ENCODE measurements at regions of chr4 and their contacts with region 1.

Region 1: GRCh38 chr4:168143601-168144000 is 51.3 kb downstream of the ANXA10 start:
- DNase-seq: no peak
- H3K4me3 ChIP-seq: no peak overlapping the region
- H3K27ac ChIP-seq: no peak overlapping the region
- H3K4me1 ChIP-seq: no peaks in the 10 kb centered on the region
- H3K27me3 ChIP-seq: no peaks in the 10 kb centered on the region

Region 2: GRCh38 chr4:168098257-168098717 is 45.3 kb before region 1 on chr4:
- CTCF ChIA-PET with region 1: no interaction called
- POLR2A ChIA-PET with region 1: no interaction called
- DNase-seq: no peak
- H3K4me3 ChIP-seq: no peak overlapping the region
- H3K27ac ChIP-seq: no peak overlapping the region
- H3K4me1 ChIP-seq: no peaks in the 10 kb centered on the region
- H3K27me3 ChIP-seq: no peaks in the 10 kb centered on the region

Region 3: GRCh38 chr4:168124008-168124641 is 19.5 kb before region 1 on chr4:
- CTCF ChIA-PET with region 1: no interaction called
- POLR2A ChIA-PET with region 1: no interaction called
- DNase-seq: no peak
- H3K4me3 ChIP-seq: no peak overlapping the region
- H3K27ac ChIP-seq: no peak overlapping the region
- H3K4me1 ChIP-seq: no peaks in the 10 kb centered on the region
- H3K27me3 ChIP-seq: no peaks in the 10 kb centered on the region

Region 4: DNA sequence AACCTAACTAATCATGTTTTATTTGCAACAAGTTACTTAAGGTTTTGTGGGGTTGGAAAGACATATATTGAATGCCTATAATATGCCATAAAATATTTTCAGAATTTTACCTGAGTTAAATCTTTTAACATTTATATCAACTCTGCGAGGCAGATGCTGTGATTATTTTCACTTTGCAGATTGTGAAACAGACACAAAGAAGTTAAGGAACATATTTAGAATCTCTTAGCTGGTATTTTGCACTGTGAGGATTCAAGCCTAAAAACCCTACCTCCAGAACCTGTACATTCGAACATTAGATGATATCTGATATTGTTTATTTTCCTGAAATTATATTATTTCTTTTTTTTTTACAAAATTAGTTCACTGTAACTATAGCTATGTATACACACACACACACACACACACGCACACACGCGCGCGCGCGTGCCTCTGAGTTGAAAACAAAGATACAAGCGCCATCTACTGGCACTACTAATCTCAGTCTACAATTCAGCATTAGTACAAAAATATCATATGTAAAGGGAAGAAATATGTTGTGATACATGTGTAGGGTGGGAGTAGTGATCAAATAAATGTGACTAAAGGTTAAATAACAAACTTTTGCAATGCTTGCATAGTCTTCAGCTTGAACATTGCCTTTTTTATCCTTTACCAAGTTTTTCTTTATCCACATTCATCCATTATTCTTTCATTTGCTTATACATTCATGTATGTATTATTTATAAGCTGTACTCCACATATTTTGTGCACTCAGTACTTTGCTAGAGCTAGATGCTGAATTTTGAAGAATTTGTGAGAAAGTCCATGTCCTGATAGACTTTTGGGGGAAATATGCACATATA is 10.2 kb after region 1 on chr4:
- CTCF ChIA-PET with region 1: interaction called, 13 read pairs
- POLR2A ChIA-PET with region 1: interaction called, 3 read pairs
- DNase-seq: peak; percentile 81 to 90 (median 88)
- H3K4me3 ChIP-seq: peak overlapping the region in 5 of 7 experiments; percentile 34 to 72 (median 49)
- H3K27ac ChIP-seq: no peak overlapping the region
- H3K4me1 ChIP-seq: peaks cover 0 to 2% (median 0%) of the 10 kb centered on the region in 4 experiments
- H3K27me3 ChIP-seq: no peaks in the 10 kb centered on the region